ENCODE measurements at regions of chr12 and their contacts with region 1.

Region 1: DNA sequence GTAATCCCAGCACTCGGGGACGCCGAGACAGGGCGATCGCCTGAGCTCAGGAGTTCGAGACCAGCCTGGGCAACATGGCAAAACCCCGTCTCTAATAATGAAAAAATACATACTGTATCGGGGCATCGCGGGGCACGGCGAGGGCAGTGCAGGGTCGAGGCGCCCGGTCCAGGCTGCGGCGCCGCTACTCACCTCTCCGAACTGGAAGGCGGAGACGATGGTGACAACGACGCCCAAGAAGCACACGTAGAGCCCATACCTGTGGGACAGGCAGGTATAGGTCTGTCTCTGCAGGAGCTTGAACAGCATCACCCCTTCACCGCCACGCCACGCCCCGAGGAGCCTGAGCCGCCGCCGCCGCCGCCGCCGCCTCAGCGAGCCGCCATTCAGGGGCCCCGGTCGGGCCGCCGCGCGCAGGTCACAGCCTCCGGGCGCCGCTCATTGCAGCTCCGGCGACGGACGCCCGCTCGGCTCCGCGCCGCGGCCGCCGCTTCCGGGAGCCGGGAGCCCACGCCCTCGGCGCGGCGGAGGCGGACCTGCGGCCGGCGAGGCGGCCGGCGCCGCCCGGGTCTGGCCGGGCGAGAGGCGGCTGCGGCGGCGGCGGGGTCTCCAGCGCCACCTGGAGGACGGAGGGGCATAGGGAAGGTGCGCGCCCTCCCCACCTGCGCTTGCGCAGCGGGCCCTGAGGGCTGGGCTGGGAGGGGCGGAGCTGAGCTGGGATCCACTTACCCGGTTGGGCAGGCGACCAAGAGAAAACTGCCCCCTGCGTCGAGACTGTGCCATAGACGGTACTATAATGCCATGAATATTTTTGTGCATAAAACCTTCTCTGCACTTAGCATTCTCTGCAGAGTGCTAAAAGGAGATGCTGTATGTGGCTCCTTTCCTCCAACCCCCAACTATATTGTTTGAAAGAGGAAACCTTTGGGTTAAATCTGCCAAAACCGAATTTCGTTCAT is at the start of gene GNPTAB:
- DNase-seq: peak; percentile 95
- ATAC-seq: peak; percentile 98
- total RNA-seq, gene GNPTAB: 45.7 TPM

Region 2: GRCh38 chr12:101773650-101774162 is 56.9 kb before region 1 on chr12:
- intact Hi-C with region 1: loop called (anchors 10 kb)
- DNase-seq: peak; percentile 79
- ATAC-seq: peak; percentile 80